ENCODE measurements at regions of chr7 and their contacts with region 1.

Region 1: GRCh38 chr7:134458806-134459698 is at the start of gene AKR1B1:
- DNase-seq: peak; percentile 85
- ATAC-seq: peak; percentile 88
- H3K4me3 Mint-ChIP-seq: peak within 1 kb of the TSS; percentile 87
- H3K27ac Mint-ChIP-seq: peak within 1 kb of the TSS; percentile 80
- H3K4me1 Mint-ChIP-seq: peaks cover 39% of the 10 kb centered on the region
- H3K27me3 Mint-ChIP-seq: no peaks in the 10 kb centered on the region
- CTCF ChIP-seq: no peak
- total RNA-seq, gene AKR1B1: 88.9 and 91.0 TPM in 2 replicates

Region 2: GRCh38 chr7:134126966-134127848 is 331.8 kb before region 1 on chr7 and contains the start of gene LRGUK:
- CTCF ChIA-PET with region 1: no interaction called
- POLR2A ChIA-PET with region 1: no interaction called
- intact Hi-C with region 1: loop called (anchors 1 kb)
- DNase-seq: peak; percentile 65
- ATAC-seq: peak; percentile 100
- H3K4me3 Mint-ChIP-seq: peak within 1 kb of the TSS; percentile 88
- H3K27ac Mint-ChIP-seq: no peak within 1 kb of the TSS
- H3K4me1 Mint-ChIP-seq: peaks cover 12% of the 10 kb centered on the region
- H3K27me3 Mint-ChIP-seq: peaks cover 4% of the 10 kb centered on the region
- CTCF ChIP-seq: no peak
- total RNA-seq, gene LRGUK: 0.91 and 1.0 TPM in 2 replicates

Region 3: GRCh38 chr7:134480736-134481135 is 21.7 kb after region 1 on chr7:
- CTCF ChIA-PET with region 1: interaction called, 12 read pairs
- POLR2A ChIA-PET with region 1: no interaction called
- intact Hi-C with region 1: no loop called
- DNase-seq: no peak
- ATAC-seq: no peak
- H3K4me3 Mint-ChIP-seq: no peak overlapping the region
- H3K27ac Mint-ChIP-seq: no peak overlapping the region
- H3K4me1 Mint-ChIP-seq: no peaks in the 10 kb centered on the region
- H3K27me3 Mint-ChIP-seq: peaks cover 20% of the 10 kb centered on the region
- CTCF ChIP-seq: no peak

Region 4: DNA sequence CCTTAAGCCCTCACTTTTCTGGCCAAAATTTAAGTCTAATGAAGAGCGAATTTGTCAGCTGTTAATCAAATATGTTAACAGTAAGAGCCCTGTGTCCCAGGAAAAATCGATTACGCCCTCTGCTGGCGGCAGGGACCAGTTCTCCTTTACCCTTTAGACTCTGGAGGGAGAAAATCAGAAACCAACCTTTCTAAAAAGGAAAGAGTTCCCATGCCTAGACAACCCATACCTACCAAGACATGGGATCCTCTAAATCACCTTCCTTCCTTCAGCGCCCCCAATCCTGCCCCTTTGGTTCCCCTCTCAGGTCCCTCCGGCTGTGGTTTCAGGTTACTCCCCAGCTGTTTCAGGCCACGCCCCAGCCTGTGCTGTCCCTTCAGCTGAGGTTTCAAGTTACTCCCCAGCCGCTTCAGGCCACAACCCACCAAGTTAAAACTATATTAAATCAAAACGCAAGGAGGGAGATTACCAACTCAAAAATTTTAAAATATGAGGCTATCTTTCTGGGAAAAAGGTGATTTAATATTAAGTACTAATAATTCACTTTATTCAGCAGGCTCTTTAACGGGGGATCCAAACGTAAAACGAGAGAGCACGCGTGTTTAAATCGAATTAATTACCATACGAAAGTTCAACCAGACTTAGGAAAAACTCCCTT is 88.5 kb after region 1 on chr7:
- CTCF ChIA-PET with region 1: no interaction called
- POLR2A ChIA-PET with region 1: no interaction called
- intact Hi-C with region 1: loop called (anchors 1 kb)
- DNase-seq: peak; percentile 42
- ATAC-seq: peak; percentile 78
- H3K4me3 Mint-ChIP-seq: peak overlapping the region; percentile 58
- H3K27ac Mint-ChIP-seq: no peak overlapping the region
- H3K4me1 Mint-ChIP-seq: peaks cover 11% of the 10 kb centered on the region
- H3K27me3 Mint-ChIP-seq: peaks cover 14% of the 10 kb centered on the region
- CTCF ChIP-seq: no peak

Region 5: GRCh38 chr7:135211179-135211945 is 752.3 kb after region 1 on chr7 and contains the start of gene WDR91:
- CTCF ChIA-PET with region 1: no interaction called
- POLR2A ChIA-PET with region 1: no interaction called
- intact Hi-C with region 1: loop called (anchors 2 kb)
- DNase-seq: peak; percentile 87
- ATAC-seq: peak; percentile 92
- H3K4me3 Mint-ChIP-seq: peak within 1 kb of the TSS; percentile 97
- H3K27ac Mint-ChIP-seq: peak within 1 kb of the TSS; percentile 97
- H3K4me1 Mint-ChIP-seq: peaks cover 40% of the 10 kb centered on the region
- H3K27me3 Mint-ChIP-seq: no peaks in the 10 kb centered on the region
- CTCF ChIP-seq: no peak
- total RNA-seq, gene WDR91: 59.5 and 60.1 TPM in 2 replicates

Region 6: GRCh38 chr7:135662373-135663114 is 1203.5 kb after region 1 on chr7 and contains the start of gene STMP1:
- CTCF ChIA-PET with region 1: no interaction called
- POLR2A ChIA-PET with region 1: no interaction called
- intact Hi-C with region 1: loop called (anchors 2 kb)
- DNase-seq: peak; percentile 96
- ATAC-seq: peak; percentile 98
- H3K4me3 Mint-ChIP-seq: peak within 1 kb of the TSS; percentile 91
- H3K27ac Mint-ChIP-seq: peak within 1 kb of the TSS; percentile 79
- H3K4me1 Mint-ChIP-seq: peaks cover 39% of the 10 kb centered on the region
- H3K27me3 Mint-ChIP-seq: no peaks in the 10 kb centered on the region
- CTCF ChIP-seq: no peak
- total RNA-seq, gene STMP1: 24.2 and 26.2 TPM in 2 replicates